ENCODE measurements at regions of chr2 and their contacts with region 1.

Region 1: GRCh38 chr2:209525834-209526281 is 102.0 kb downstream of the MAP2 start:
- DNase-seq: peak; percentile 55
- ATAC-seq: peak; percentile 69
- H3K4me3 ChIP-seq: no peak overlapping the region
- H3K27ac ChIP-seq: peak overlapping the region; percentile 16
- H3K4me1 ChIP-seq: peaks cover 31% of the 10 kb centered on the region
- H3K27me3 ChIP-seq: no peaks in the 10 kb centered on the region
- CTCF ChIP-seq: no peak

Region 2: DNA sequence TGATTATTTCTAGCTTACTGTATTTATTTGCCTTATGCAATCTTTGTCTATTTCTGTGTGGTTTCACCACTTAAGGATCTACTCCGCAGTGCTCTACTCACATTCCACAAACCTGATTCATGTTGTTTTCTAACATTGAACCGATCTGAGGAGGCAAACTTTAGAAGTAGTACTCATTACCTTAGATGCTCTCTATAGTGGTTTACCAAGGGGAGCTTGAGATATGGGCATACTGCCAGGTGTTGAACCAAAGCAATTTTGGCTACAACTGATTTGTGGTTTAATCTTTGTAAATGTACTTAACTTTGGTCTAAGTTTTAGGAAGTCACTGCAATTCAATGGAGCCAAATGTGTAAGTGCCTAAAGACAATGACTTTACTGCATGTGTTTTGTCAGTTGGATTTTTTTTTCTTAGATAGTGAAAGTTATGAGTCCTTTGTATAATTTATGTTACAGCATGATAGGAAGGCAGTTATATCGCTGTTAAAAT is 51.9 kb before region 1 on chr2:
- CTCF ChIA-PET with region 1: no interaction called
- POLR2A ChIA-PET with region 1: no interaction called
- intact Hi-C with region 1: loop called (anchors 2 kb)
- DNase-seq: peak; percentile 94
- ATAC-seq: peak; percentile 86
- H3K4me3 ChIP-seq: no peak overlapping the region
- H3K27ac ChIP-seq: 0 out of 2 replicates have a peak overlapping the region, but pooled peaks have one; percentile 9
- H3K4me1 ChIP-seq: peaks cover 38% of the 10 kb centered on the region
- H3K27me3 ChIP-seq: no peaks in the 10 kb centered on the region
- CTCF ChIP-seq: no peak